Mammary epithelial cell (primary cell): ENCODE measurements at regions of chr3 and their contacts with region 1.

Region 1: DNA sequence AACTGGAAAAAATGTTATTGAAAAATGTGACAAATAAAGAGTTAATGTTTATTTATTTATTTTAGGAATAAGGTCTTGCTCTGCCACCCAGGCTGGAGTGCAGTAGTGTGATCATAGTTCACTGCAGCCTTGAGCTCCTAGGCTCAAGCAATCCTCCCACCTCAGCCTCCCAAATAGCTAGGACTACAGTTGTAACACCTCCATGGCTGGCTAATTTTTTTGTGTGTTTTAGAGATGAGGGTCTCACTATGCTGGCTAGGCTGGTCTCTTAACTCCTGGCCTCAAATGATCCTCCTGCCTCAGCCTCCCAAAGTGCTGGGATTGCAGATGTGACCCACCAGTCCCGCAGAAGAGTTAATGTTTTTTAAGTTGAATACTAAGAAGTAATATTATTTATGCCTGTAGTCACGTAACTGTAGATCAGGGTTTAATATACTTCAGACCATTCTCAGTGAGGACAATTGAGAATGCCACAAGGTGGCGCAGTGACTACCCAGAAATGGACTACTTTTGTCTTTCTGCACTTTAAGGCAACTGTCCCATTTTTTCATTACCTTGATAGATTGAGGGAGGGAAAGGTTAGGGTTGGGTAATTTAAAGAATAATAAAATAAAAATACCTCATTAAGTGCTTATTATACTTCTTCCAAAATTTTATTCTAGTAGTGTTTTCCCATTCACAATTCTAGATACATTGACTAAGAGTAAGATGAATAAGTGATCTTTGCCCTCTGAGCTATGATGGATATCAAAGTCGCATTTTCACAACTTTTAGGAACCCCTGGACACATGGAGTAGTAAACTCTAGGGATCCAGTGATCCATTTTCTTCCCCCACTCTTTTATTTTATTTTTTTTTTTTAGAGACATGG is 6.0 kb downstream of the MUC13 start:
- DNase-seq: peak; percentile 45
- H3K4me3 ChIP-seq: no peak overlapping the region
- H3K27ac ChIP-seq: no peak overlapping the region
- H3K4me1 ChIP-seq: no peaks in the 10 kb centered on the region
- H3K27me3 ChIP-seq: no peaks in the 10 kb centered on the region
- CTCF ChIP-seq: peak; percentile 64 to 78

Region 2: DNA sequence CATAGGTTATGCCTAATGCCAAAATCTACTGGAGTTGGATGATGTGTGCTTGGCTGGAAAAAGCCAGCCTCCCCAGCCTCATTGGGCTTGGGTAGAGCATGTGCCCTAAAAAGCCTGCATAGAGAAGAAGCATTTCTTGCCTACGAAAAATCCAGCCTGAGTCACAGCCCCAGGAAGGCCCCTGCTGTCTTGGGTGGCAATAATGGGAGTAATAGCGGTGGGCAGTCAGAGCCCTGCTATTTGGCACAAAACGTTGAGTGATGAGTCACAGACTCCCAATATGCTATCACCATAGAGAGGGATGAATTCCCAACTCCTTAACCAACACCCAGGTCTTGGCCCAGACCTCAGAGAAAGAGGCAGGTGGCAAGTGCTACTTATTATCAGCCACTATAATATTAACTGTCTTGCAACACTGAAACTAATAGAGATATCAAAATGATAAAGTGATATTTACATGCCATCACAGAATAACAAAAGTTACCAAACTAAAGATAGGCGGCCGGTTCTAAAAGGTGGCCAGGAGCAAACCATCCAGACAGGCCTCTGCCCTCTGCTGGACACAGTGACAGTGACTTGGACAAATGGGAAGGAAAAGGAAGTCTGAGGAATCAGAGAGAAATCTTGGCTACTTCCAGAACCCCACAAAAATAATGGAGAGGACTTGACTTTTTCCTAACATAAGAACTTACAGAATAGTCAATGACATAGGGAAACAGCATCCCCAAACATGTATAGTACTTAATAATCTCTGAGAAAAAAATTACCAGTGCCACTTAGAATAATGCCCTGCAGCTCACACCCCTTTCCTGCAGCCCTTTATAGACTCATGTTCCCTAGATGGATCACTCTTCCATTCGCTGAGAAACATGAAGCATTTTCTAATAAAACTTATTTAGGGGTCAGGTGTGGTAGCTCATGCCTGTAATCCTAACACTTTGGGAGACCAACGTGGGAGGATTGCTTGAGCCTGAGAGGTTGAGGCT is 57.9 kb after region 1 on chr3:
- CTCF ChIA-PET with region 1: no interaction called
- dilution Hi-C with region 1: no loop called
- in situ Hi-C with region 1: no loop called
- intact Hi-C with region 1: loop called (anchors 1 kb)
- DNase-seq: peak; percentile 71
- H3K4me3 ChIP-seq: no peak overlapping the region
- H3K27ac ChIP-seq: peak overlapping the region; percentile 62
- H3K4me1 ChIP-seq: peaks cover 19% of the 10 kb centered on the region
- H3K27me3 ChIP-seq: no peaks in the 10 kb centered on the region
- CTCF ChIP-seq: peak; percentile 49 to 63

Region 3: DNA sequence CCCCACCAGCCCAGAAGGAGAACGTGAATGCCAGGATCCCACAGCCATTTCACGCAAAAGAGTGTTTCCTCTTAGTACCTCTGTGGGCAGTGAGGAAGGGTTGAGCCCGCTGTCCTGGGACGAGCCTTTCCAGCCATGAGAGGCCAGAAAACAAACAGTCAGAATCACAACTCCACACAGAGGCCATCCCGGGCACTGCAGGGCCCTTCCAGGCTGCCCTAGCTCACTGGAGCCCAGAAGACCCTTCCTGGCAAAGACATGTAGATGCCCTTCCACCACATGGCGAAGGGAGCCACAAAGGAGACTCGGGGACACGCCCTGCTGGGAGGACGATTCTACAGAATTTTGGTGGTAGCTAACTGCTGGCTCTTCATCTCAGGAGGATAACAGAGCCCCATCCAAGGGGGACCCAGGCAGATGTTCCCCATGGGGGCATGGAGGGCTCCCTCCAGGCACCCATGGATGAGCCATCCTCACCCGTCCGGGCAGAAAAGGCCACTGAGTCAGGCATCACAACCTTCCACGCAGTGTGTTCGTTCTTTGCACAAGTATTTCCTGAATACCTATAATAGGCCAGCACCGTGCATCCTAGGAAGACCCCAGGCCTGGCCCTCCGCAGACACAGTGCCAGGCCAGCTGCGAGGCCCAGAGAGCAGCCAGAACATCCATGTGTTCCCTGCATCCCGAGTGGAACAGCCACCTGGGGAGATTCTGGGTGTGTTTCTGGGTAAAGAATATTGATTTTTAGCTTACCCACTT is 236.8 kb after region 1 on chr3:
- CTCF ChIA-PET with region 1: no interaction called
- dilution Hi-C with region 1: no loop called
- in situ Hi-C with region 1: no loop called
- intact Hi-C with region 1: loop called (anchors 5 kb)
- DNase-seq: no peak
- H3K4me3 ChIP-seq: no peak overlapping the region
- H3K27ac ChIP-seq: no peak overlapping the region
- H3K4me1 ChIP-seq: no peaks in the 10 kb centered on the region
- H3K27me3 ChIP-seq: no peaks in the 10 kb centered on the region
- CTCF ChIP-seq: peak; percentile 30 to 55

Region 4: GRCh38 chr3:125202197-125202596 is 273.6 kb after region 1 on chr3:
- CTCF ChIA-PET with region 1: no interaction called
- dilution Hi-C with region 1: no loop called
- in situ Hi-C with region 1: no loop called
- intact Hi-C with region 1: loop called (anchors 1 kb)
- DNase-seq: no peak
- H3K4me3 ChIP-seq: no peak overlapping the region
- H3K27ac ChIP-seq: no peak overlapping the region
- H3K4me1 ChIP-seq: no peaks in the 10 kb centered on the region
- H3K27me3 ChIP-seq: no peaks in the 10 kb centered on the region
- CTCF ChIP-seq: peak; percentile 37 to 42